ENCODE measurements at regions of chr6 and their contacts with region 1.

Region 1: GRCh38 chr6:110389689-110390382 is 25.5 kb downstream of the DDO start:
- DNase-seq: no peak
- H3K4me3 ChIP-seq: no peak overlapping the region
- H3K27ac ChIP-seq: no peak overlapping the region
- H3K4me1 ChIP-seq: no peaks in the 10 kb centered on the region
- H3K27me3 ChIP-seq: no peaks in the 10 kb centered on the region
- CTCF ChIP-seq: no peak
- POLR2A ChIP-seq: no peak

Region 2: DNA sequence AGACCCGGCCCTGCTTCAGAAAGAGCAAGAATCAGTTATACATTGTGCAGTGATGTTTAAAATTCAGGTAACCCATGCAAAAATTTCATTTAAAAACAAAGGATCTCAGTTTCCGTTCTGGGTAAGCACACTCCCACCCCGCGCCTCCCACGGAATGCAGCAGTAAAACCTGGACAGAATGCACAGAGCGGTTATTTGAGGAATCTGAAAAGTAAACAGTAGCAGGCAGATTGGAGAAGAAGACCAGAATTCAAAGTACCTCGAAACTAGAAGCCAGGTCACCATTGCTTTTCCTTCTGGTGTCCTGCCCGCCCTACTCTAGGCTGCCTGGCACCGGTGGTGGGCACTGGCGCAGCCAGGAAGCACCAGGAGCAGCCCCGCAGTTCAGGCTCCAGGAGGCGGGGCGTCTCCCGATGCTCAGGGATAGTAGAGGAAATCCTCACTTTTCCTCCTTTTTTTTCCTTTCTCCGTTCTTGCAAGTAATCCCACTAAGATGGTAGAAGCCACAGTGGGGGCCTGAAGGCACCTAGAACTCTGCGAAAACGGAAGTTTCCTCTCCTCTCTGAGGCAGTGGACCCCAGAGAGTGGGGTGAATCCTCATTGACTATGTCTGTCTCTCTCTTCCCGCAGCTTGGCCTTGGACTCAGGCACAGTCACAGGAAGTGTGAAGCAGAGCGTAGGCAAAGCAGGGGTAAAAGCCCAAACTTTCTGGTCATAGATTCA is 60.0 kb before region 1 on chr6:
- intact Hi-C with region 1: loop called (anchors 5 kb)
- DNase-seq: no peak
- H3K4me3 ChIP-seq: peak overlapping the region; percentile 21 to 26
- H3K27ac ChIP-seq: peak overlapping the region; percentile 45 to 49
- H3K4me1 ChIP-seq: no peaks in the 10 kb centered on the region
- H3K27me3 ChIP-seq: no peaks in the 10 kb centered on the region
- CTCF ChIP-seq: no peak
- POLR2A ChIP-seq: no peak

Region 3: GRCh38 chr6:110491644-110492317 is 101.9 kb after region 1 on chr6:
- intact Hi-C with region 1: no loop called
- DNase-seq: no peak
- H3K4me3 ChIP-seq: no peak overlapping the region
- H3K27ac ChIP-seq: no peak overlapping the region
- H3K4me1 ChIP-seq: no peaks in the 10 kb centered on the region
- H3K27me3 ChIP-seq: no peaks in the 10 kb centered on the region
- CTCF ChIP-seq: no peak
- POLR2A ChIP-seq: peak; percentile 16